ENCODE measurements at regions of chr1 and their contacts with region 1.

Region 1: DNA sequence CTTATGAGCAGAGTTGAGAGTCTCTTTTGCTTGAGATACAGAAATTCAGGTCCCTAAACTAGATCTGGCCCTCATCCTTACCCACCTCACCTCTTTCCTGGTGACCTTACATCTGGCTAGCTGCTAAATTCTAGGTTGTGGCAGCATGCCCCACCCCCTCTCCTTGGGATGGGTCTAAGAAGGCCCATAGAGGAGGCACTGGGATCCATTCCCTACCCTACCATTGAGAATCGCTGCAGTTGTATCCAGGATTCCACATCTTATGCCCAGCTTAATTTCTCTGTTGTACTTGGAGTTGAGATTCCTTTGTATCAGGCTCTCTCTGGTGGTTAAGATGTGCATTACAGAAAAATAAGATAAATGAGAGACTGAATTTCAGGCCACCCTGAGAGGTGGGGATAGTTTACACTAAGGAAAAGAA is 9.5 kb upstream of the TMEM39B start:
- DNase-seq: no peak
- H3K4me3 ChIP-seq: no peak overlapping the region
- H3K27ac ChIP-seq: peak overlapping the region in 5 of 8 donors; percentile 1 to 59 (median 22)
- H3K4me1 ChIP-seq: peaks cover 4 to 40% (median 17%) of the 10 kb centered on the region in 6 donors
- H3K27me3 ChIP-seq: no peaks in the 10 kb centered on the region
- CTCF ChIP-seq: peak in 9 of 11 experiments; percentile 39 to 64 (median 56)
- POLR2A ChIP-seq: no peak

Region 2: GRCh38 chr1:32013386-32014198 is 49.7 kb before region 1 on chr1 and contains the start of gene KHDRBS1:
- intact Hi-C with region 1: loop called (anchors 10 kb)
- DNase-seq: peak; percentile 99
- H3K4me3 ChIP-seq: peak within 1 kb of the TSS; percentile 85 to 99 (median 90)
- H3K27ac ChIP-seq: peak within 1 kb of the TSS; percentile 96 to 100 (median 100)
- H3K4me1 ChIP-seq: peaks cover 25 to 60% (median 48%) of the 10 kb centered on the region in 6 donors
- H3K27me3 ChIP-seq: no peaks in the 10 kb centered on the region
- CTCF ChIP-seq: peak in 2 of 11 experiments; percentile 33 to 41
- POLR2A ChIP-seq: peak; percentile 57 to 64 (median 58)
- total RNA-seq, gene KHDRBS1: 69.9 to 109 (median 97.9) TPM

Region 3: GRCh38 chr1:32111789-32112188 is 48.5 kb after region 1 on chr1:
- intact Hi-C with region 1: no loop called
- DNase-seq: no peak
- H3K4me3 ChIP-seq: peak overlapping the region in 1 of 8 donors; percentile 12
- H3K27ac ChIP-seq: peak overlapping the region in 5 of 8 donors; percentile 5 to 69 (median 39)
- H3K4me1 ChIP-seq: peaks cover 31 to 92% (median 69%) of the 10 kb centered on the region in 6 donors
- H3K27me3 ChIP-seq: no peaks in the 10 kb centered on the region
- CTCF ChIP-seq: no peak
- POLR2A ChIP-seq: no peak

Measured in spleen (tissue), 13 donors.